ENCODE measurements at regions of chr20 and their contacts with region 1.

Region 1: DNA sequence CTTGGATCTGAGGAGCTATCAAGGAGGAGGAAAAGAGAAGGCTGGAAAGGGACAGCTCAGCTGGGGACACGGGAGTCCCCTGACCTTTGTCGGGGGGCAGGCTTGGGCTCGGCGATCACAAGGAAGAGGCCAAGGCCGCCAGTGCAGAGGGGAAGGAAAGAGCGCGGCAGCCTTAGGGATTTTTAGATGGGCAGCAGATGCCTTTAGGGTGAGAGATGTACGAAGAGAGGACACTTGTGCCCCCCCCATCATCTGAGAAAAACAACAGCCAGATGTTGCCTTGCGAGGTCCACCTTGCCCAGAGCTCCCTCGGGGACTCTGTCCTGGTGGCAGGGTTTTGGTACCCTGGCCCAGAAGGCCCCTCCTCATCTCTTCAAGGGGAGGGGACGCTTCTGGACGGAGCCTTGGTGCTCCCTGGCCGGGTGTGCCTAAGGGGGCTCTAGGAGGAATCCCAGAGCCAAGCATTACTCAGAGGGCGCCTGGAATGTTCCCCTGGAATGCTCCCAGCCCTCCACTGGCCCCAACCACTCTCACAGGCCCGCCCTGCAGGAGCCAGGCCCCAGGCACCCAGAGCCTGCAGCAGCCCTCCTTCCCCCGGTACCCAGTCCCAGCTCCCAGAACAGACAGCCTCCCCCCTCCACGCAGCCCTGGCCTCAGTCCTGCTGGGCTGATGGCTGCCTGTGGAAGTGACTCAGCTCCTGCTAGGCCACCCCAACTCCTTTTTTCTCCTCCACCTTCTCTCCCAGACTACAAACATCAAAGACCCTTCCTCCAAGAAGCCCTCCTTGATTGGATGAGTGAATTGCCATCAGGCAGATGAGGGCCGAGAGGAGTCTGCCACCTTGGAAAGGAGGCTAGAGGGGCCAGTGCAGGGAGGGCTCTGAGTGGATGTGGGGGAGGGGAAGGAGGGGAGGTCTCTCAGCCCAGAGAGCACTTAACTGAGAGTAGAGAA is 1.8 kb downstream of the ADAM33 start:
- DNase-seq: no peak
- ATAC-seq: no peak
- H3K4me3 Mint-ChIP-seq: no peak overlapping the region
- H3K27ac Mint-ChIP-seq: no peak overlapping the region
- H3K4me1 Mint-ChIP-seq: peaks cover 6% of the 10 kb centered on the region
- H3K27me3 Mint-ChIP-seq: peaks cover 71% of the 10 kb centered on the region

Region 2: DNA sequence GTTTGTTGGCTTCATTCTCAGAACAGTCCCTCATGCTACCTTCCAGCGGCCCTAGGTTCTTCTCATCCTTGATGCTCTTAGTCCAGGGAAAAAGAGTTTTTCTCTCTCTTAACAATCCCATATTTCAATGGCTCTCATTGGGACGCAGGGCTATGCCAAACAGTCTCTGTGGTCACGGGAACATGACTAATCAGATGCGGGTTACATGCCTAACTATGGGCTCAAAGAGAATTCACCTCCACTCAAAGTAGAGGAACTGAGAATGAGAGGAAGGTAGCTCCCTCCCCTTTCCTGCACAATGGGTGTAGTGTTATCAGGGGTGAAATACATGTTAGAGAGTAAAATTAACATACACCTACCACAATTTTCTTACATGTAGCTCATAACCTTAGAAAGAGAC is 227.3 kb before region 1 on chr20:
- CTCF ChIA-PET with region 1: no interaction called
- DNase-seq: no peak
- ATAC-seq: no peak
- H3K4me3 Mint-ChIP-seq: no peak overlapping the region
- H3K27ac Mint-ChIP-seq: no peak overlapping the region
- H3K4me1 Mint-ChIP-seq: no peaks in the 10 kb centered on the region
- H3K27me3 Mint-ChIP-seq: peaks cover 19% of the 10 kb centered on the region

Region 3: GRCh38 chr20:3563548-3564177 is 116.4 kb before region 1 on chr20:
- CTCF ChIA-PET with region 1: interaction called, 10 read pairs
- DNase-seq: no peak
- ATAC-seq: peak; percentile 47
- H3K4me3 Mint-ChIP-seq: no peak overlapping the region
- H3K27ac Mint-ChIP-seq: no peak overlapping the region
- H3K4me1 Mint-ChIP-seq: no peaks in the 10 kb centered on the region
- H3K27me3 Mint-ChIP-seq: no peaks in the 10 kb centered on the region

Region 4: GRCh38 chr20:3658716-3659491 is 21.1 kb before region 1 on chr20:
- CTCF ChIA-PET with region 1: interaction called, 47 read pairs
- DNase-seq: peak; percentile 79
- ATAC-seq: peak; percentile 88
- H3K4me3 Mint-ChIP-seq: peak overlapping the region; percentile 12
- H3K27ac Mint-ChIP-seq: peak overlapping the region; percentile 59
- H3K4me1 Mint-ChIP-seq: peaks cover 26% of the 10 kb centered on the region
- H3K27me3 Mint-ChIP-seq: peaks cover 55% of the 10 kb centered on the region

Region 5: DNA sequence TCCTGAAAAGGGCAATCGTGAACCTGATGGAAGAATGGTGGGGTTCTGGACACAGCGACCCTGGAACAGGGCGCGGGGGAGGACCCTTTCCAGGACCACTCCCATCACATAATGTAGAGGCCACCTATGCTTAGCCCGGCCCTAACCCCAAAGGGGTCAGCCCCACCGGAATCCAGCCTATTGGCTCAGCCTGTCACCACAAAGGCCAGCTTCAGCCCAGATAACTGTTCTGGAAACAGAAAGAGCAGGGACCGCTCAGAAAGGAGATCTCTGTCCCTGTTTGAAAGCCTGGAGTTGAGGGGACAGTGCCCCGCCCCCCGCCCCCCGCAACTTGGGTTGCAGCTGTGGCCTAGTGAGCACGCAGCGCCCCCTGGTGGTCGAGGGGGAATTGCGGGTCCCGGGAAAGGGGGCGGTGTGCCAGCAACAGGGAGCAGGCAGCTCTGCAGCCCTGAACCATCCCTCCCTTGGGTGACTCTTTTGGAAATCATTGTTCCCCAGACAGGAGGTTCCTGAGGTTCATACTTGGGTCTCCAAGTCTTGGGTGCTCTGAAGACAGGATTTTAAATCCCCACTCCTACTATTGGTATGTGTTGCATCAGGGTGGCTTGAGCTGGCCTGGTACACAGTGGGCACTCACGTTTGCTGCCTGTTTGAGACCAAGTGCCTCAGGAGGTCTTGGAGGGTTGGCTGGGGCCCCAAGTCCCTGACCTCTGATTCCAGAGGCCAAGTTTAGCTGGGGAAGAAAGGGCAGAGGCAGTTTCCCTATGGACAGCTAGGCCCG is 30.9 kb after region 1 on chr20:
- CTCF ChIA-PET with region 1: interaction called, 122 read pairs
- DNase-seq: peak; percentile 80
- ATAC-seq: peak; percentile 78
- H3K4me3 Mint-ChIP-seq: no peak overlapping the region
- H3K27ac Mint-ChIP-seq: no peak overlapping the region
- H3K4me1 Mint-ChIP-seq: peaks cover 6% of the 10 kb centered on the region
- H3K27me3 Mint-ChIP-seq: peaks cover 8% of the 10 kb centered on the region

Region 6: DNA sequence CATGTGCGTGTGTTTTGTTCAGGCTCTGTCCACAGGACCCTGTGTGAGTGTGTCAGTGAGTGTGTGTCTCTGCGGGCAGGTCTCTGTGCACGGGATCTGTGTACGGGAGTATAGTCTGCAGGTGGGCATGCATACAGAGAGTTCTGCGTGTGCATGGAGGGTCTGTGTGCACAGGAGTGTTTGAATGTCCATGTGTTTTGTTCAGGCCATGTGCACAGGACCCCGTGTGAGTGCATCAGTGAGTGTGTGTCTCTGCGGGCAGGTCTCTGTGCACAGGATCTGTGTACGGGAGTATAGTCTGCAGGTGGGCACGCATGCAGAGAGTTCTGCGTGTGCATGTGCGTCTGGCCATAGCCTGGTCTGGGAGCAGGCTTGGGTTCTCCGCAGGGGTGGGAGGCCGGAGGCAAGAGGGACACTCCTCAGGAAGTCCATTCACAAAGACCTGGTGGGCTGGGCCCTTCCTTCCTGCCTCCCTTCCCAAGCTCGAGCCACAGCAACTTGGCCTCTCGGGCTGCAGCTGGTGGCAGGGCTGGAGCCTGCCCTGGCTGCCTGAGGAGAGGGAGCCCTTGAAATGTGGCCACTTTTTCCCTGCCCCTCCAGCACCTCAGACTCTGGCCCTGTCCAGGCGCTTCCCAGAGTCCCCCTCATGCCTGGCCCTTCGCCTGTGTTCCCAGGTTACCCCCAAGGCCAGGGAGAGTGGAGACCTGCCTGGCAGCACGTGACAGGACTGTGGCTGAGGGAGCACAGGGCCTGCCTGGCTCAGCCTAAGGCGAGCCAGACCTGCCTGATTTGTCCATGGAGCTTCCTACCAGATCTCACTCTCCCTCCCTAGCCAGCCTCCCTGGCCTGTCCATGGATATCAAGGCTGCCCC is 59.3 kb after region 1 on chr20:
- CTCF ChIA-PET with region 1: no interaction called
- DNase-seq: no peak
- ATAC-seq: peak; percentile 13
- H3K4me3 Mint-ChIP-seq: no peak overlapping the region
- H3K27ac Mint-ChIP-seq: no peak overlapping the region
- H3K4me1 Mint-ChIP-seq: no peaks in the 10 kb centered on the region
- H3K27me3 Mint-ChIP-seq: peaks cover 10% of the 10 kb centered on the region

Region 7: DNA sequence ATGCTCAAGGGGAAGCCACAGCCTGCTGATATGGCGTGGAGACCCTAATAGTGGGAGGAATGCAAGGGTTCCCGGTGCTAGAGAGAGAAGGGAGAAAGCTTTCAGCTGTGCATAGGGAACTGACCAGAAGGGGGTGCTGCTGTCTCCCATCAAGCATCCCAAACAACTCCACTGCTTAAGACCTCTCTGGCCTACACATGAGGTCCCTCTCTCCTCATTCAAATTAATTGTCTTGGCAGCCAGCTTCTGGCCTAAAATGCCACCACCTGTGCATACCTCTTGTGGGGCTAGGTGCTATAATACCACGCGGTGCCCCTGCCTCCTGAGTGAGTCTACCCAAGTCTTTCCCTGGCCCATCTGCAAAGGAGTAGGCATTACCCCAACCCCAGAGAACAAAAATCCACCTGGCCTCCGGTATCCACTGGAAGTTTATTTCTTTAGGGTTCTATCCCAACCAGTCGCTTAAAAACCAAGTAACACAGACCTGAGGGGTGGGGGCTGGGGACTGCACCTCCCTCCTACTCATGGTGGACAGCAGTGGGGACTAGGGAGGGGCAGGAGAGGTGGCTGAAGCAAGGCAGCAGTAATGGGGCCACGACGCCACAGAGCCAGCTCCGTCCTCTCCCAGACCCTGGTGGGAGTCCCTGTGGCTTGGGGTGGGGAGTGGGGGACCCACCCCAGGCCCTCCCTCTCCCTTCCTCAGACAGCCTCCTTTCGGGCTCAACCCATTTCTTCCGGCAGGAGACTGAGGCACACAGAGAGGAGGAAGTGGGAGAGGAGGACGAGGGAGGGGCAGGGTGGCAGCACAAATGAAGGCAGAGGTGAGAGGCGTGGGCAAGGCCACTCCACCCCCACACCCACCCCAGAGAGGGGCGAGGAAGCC is 73.3 kb after region 1 on chr20:
- CTCF ChIA-PET with region 1: interaction called, 15 read pairs
- DNase-seq: peak; percentile 75
- ATAC-seq: peak; percentile 72
- H3K4me3 Mint-ChIP-seq: no peak overlapping the region
- H3K27ac Mint-ChIP-seq: no peak overlapping the region
- H3K4me1 Mint-ChIP-seq: peaks cover 7% of the 10 kb centered on the region
- H3K27me3 Mint-ChIP-seq: peaks cover 4% of the 10 kb centered on the region

Region 8: GRCh38 chr20:3781153-3781910 is 101.3 kb after region 1 on chr20 and contains the start of gene SPEF1:
- CTCF ChIA-PET with region 1: interaction called, 15 read pairs
- DNase-seq: peak; percentile 65
- ATAC-seq: peak; percentile 49
- H3K4me3 Mint-ChIP-seq: peak within 1 kb of the TSS; percentile 27
- H3K27ac Mint-ChIP-seq: peak within 1 kb of the TSS; percentile 5
- H3K4me1 Mint-ChIP-seq: peaks cover 43% of the 10 kb centered on the region
- H3K27me3 Mint-ChIP-seq: peaks cover 25% of the 10 kb centered on the region
- total RNA-seq, gene SPEF1: 0.18 TPM in 1 of 2 experiments, not detected in the other